ENCODE measurements at regions of chr15 and their contacts with region 1.

Region 1: DNA sequence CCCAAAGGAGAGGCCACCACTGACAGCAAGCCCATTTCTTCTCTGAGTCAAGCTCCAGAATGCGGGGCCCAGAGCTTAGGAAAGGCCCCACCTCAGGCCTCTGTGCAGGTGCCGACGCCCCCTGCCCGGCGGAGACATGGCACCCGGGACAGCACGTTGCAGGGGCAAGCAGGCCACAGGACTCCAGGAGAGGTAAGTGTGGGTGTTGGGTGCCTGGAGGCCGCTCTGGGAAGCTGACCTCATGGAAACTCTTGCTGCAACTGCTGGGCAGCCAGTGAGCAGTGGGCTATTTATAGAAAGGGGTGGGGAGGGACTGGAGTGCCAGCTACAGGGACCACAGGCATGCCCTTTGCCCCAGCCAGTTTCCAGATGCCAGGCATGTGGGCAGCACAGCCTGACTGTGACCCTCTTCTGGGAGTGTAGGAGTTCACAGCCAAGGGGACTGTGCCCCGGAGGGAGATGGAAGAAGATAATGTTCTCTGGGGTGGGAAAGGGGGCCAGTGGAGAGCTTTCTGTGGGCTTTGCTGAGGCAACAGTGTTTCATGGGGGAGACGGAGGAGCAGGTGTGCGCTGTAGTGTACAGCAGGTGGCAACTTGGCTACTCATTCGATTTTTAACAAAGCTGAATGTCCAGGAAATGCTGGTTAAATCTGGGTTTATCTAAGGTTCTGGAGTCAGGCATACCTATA is 23.7 kb downstream of the ALPK3 start:
- DNase-seq: peak; percentile 80 to 93
- ATAC-seq: peak; percentile 80 to 86 (median 83)
- H3K4me3 ChIP-seq: peak overlapping the region; percentile 38
- H3K27ac ChIP-seq: peak overlapping the region; percentile 99
- H3K4me1 ChIP-seq: peaks cover 79% of the 10 kb centered on the region
- H3K27me3 ChIP-seq: no peaks in the 10 kb centered on the region
- CTCF ChIP-seq: no peak

Region 2: GRCh38 chr15:84911879-84912660 is 71.2 kb after region 1 on chr15:
- intact Hi-C with region 1: loop called in 1 of 2 experiments (anchors 5 kb)
- DNase-seq: peak; percentile 91 to 95
- ATAC-seq: peak; percentile 82 to 89 (median 86)
- H3K4me3 ChIP-seq: no peak overlapping the region
- H3K27ac ChIP-seq: peak overlapping the region; percentile 86
- H3K4me1 ChIP-seq: peaks cover 56% of the 10 kb centered on the region
- H3K27me3 ChIP-seq: no peaks in the 10 kb centered on the region
- CTCF ChIP-seq: no peak

Measured in psoas muscle (tissue), 8 donors.